ENCODE measurements at regions of chr9 and their contacts with region 1.

Region 1: GRCh38 chr9:69672596-69673310 is 582 bp upstream of the APBA1 start:
- DNase-seq: peak; percentile 80 to 88 (median 88)
- H3K4me3 ChIP-seq: peak overlapping the region; percentile 40 to 87 (median 68)
- H3K27ac ChIP-seq: no peak overlapping the region
- H3K4me1 ChIP-seq: peaks cover 0 to 26% (median 19%) of the 10 kb centered on the region in 4 experiments
- H3K27me3 ChIP-seq: peaks cover 0 to 19% (median 4%) of the 10 kb centered on the region in 5 experiments

Region 2: DNA sequence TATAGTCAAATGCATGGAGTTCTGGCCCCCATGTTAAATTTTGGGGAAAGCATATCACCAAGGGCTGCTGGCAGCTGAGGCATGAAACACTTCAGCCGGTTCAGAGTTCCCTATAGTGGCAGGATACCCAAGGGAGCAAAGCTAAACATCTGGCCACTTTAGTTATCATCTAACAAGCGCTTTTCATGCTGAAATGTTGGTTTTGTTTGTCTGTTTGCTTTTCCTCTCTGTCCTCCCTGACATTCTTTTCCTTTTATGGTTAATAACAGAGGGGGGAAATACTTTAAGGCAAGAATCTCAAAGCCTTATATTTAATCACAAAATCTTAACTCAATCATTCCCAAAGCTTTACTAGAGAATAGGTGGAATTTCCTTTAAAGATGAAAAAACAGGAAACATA is 12.4 kb before region 1 on chr9:
- CTCF ChIA-PET with region 1: interaction called, 17 read pairs
- POLR2A ChIA-PET with region 1: no interaction called
- DNase-seq: no peak
- H3K4me3 ChIP-seq: no peak overlapping the region
- H3K27ac ChIP-seq: no peak overlapping the region
- H3K4me1 ChIP-seq: no peaks in the 10 kb centered on the region
- H3K27me3 ChIP-seq: no peaks in the 10 kb centered on the region